ENCODE measurements at regions of chr14 and their contacts with region 1.

Region 1: GRCh38 chr14:25132732-25133422 is 82.9 kb upstream of the STXBP6 start:
- DNase-seq: peak; percentile 66
- CTCF ChIP-seq: peak; percentile 89

Region 2: GRCh38 chr14:24710403-24711112 is 422.3 kb before region 1 on chr14:
- in situ Hi-C with region 1: loop called (anchors 25 kb)
- DNase-seq: peak; percentile 58
- CTCF ChIP-seq: peak; percentile 86

Region 3: DNA sequence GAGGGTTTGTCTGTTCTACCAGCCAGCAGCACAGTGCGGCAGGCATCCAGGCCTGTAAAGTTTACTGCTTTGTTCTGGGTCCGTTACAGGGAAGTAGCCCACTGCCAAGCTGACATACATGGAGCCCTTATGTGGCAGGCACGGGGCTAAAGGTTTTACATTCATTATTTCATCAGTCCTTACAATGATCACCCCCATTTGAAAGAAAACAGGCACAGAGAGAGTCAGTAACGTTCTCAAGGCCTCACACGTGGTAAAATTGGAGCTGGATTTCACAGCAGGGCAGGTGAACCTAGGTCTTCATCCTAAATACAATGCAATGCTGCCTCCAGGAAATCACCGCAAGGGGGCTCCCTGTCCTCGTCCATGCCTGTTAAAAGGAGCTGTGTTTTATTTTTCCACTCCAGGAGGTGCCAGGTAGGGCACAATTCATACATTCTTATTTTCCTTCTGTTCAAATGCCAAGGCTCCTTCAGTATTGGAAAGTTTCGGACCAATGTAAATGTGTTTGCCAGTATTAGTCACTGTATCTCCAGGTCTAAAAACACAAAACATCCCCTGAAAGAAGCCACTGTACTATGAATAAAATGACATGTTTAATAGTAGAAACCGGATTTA is 326.7 kb before region 1 on chr14:
- in situ Hi-C with region 1: loop called (anchors 25 kb)
- DNase-seq: peak; percentile 40
- CTCF ChIP-seq: peak; percentile 84